Activated CD4-positive, alpha-beta T cell treated with anti-CD3 and anti-CD28 coated beads for 36 hours (primary cell): ENCODE measurements at regions of chr4 and their contacts with region 1.

Region 1: GRCh38 chr4:113474017-113474416 is 287.5 kb downstream of the CAMK2D start:
- DNase-seq: peak; percentile 47
- ATAC-seq: peak; percentile 76
- H3K4me3 Mint-ChIP-seq: no peak overlapping the region
- H3K27ac Mint-ChIP-seq: peak overlapping the region; percentile 88
- H3K4me1 Mint-ChIP-seq: peaks cover 66% of the 10 kb centered on the region
- H3K27me3 Mint-ChIP-seq: no peaks in the 10 kb centered on the region

Region 2: GRCh38 chr4:113445286-113445685 is 28.7 kb before region 1 on chr4:
- CTCF ChIA-PET with region 1: interaction called, 4 read pairs
- POLR2A ChIA-PET with region 1: no interaction called
- intact Hi-C with region 1: loop called (anchors 1 kb)
- DNase-seq: no peak
- ATAC-seq: no peak
- H3K4me3 Mint-ChIP-seq: no peak overlapping the region
- H3K27ac Mint-ChIP-seq: peak overlapping the region; percentile 85
- H3K4me1 Mint-ChIP-seq: peaks cover 27% of the 10 kb centered on the region
- H3K27me3 Mint-ChIP-seq: no peaks in the 10 kb centered on the region

Region 3: DNA sequence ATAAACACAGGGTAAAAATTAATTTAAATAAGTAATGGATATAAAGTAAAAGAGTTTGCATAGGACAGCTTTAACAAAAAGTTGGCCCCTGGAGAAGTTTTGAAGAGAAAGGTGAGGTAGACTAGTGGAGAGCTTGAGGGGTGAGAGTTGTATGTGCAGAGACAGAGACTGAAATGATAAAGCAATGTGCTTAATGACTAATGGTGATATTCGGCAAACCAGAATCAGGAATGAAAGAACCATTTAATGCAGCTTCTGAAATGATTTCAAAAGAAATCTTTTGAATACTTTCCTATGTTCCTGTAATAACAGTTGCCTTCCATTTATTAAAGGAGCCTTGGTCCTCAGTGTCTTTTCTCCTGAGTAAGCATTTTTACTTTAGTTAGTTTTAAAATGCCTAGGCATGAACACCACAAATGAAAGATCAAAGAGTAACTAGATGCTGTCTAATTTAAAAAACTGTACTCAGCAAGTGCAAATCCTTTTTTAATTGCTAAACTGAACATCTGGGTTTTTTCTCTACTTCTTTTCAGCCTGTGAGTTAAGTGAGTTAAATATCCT is 259.0 kb after region 1 on chr4:
- CTCF ChIA-PET with region 1: no interaction called
- POLR2A ChIA-PET with region 1: no interaction called
- intact Hi-C with region 1: loop called in 1 of 2 experiments (anchors 2 kb)
- DNase-seq: no peak
- ATAC-seq: peak; percentile 60
- H3K4me3 Mint-ChIP-seq: no peak overlapping the region
- H3K27ac Mint-ChIP-seq: peak overlapping the region; percentile 1
- H3K4me1 Mint-ChIP-seq: peaks cover 78% of the 10 kb centered on the region
- H3K27me3 Mint-ChIP-seq: no peaks in the 10 kb centered on the region